Calu3 (cell line): ENCODE measurements at regions of chr3 and their contacts with region 1.

Region 1: DNA sequence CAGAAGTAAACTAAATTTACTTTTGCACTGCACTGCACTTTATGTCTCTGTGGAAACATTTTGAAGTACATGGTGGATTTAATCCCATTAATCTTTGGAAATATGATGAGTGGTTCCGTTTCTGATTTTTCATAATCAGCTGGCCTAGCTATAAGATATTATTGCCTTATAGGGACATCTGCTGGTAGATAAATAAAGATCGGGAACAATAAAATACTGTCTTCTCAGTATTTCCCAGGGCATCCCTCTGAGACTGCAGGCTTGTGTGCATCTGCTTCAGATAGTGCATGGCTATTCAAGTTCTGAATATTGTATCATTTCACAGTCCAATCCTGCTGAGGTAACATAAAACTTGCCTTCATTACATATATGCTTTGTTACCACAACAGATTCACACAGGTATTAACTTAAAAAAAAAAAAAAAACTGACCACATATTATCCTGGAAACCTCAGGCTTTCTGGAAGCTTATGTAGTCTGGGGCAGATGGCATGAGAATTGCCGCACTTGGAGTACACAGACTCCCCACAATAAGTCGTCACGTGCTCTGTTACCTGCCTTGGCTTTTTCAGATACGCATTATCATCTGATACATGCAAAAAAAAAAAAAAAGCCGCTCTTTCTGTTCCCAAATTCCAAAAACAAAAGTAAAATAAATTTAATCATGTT is 330.8 kb upstream of the AGTR1 start:
- DNase-seq: no peak
- H3K4me3 Mint-ChIP-seq: no peak overlapping the region
- H3K27ac Mint-ChIP-seq: no peak overlapping the region
- H3K4me1 Mint-ChIP-seq: no peaks in the 10 kb centered on the region
- H3K27me3 Mint-ChIP-seq: no peaks in the 10 kb centered on the region
- CTCF ChIP-seq: peak; percentile 51

Region 2: DNA sequence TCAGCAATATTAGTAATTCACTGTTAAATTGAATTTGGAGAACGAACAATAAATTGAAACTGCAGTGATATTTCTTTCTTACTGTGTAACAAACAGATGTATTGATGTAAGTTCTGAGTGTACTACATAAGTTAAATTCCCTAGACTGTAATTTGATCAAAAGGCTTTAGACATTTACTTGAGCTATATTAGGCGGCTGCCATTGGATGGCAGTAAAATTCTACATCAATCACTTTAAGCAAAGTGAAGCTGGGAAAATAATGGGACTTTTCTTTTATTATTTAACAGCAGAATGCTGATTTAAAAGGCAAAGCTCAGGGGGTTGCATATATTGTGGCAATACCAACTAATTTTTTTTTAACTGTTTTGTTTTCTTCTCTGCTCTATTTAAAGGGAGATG is 1549.2 kb before region 1 on chr3:
- CTCF ChIA-PET with region 1: no interaction called
- intact Hi-C with region 1: loop called (anchors 5 kb)
- DNase-seq: no peak
- H3K4me3 Mint-ChIP-seq: no peak overlapping the region
- H3K27ac Mint-ChIP-seq: no peak overlapping the region
- H3K4me1 Mint-ChIP-seq: no peaks in the 10 kb centered on the region
- H3K27me3 Mint-ChIP-seq: no peaks in the 10 kb centered on the region
- CTCF ChIP-seq: peak; percentile 32

Region 3: DNA sequence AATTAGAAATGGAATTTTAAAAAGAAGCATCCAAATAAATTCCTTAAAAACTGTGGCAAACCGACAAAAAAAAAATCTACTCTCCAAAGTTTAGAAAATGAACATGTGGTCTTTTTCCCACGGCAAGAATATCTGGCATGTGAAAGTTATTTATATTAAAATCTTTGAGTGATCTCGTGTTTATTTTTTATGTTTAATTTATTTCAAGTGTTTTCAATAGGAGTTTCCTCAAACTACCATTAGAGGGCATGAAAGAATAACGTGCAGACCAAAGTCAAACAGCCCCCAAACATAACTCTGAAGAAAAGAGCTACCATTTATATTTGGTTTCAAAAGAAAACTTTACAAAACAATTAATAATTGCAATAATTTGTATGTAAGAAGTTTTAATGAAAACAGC is 1246.9 kb before region 1 on chr3:
- CTCF ChIA-PET with region 1: interaction called, 4 read pairs
- intact Hi-C with region 1: loop called (anchors 2 kb)
- DNase-seq: no peak
- H3K4me3 Mint-ChIP-seq: no peak overlapping the region
- H3K27ac Mint-ChIP-seq: no peak overlapping the region
- H3K4me1 Mint-ChIP-seq: no peaks in the 10 kb centered on the region
- H3K27me3 Mint-ChIP-seq: no peaks in the 10 kb centered on the region
- CTCF ChIP-seq: peak; percentile 47

Region 4: DNA sequence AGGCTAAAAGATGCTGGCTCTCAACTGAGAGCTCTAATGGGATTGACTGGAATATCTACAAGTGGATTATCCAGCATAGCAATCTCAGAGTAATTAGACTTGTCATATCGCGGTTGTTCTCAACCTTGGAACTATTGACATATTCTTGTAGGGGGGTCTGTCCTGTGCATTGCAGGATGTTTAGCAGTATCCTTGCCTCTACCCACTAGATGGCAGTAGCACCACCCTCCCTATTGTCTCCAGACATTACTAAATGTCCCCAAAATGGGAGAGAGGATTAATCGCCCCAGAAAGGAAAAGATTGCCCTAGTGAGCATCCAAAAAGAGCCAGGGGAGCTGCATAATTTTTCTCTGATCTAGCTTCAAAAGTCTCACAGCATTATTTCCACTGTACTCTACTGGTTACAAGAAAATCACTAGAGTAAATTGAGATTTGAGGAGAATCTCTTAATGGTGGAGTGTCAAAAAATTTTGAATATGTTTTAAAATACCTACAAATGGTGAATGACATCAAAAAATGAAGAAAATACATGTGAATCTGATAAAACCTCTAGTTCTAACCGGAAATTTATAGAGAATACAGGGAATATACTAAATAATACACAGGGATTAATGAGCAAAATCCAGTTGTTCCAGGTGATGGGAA is 57.4 kb before region 1 on chr3:
- CTCF ChIA-PET with region 1: no interaction called
- intact Hi-C with region 1: loop called (anchors 1 kb)
- DNase-seq: peak; percentile 68
- H3K4me3 Mint-ChIP-seq: no peak overlapping the region
- H3K27ac Mint-ChIP-seq: no peak overlapping the region
- H3K4me1 Mint-ChIP-seq: peaks cover 7% of the 10 kb centered on the region
- H3K27me3 Mint-ChIP-seq: no peaks in the 10 kb centered on the region
- CTCF ChIP-seq: peak; percentile 64